ENCODE measurements at regions of chr19 and their contacts with region 1.

Region 1: DNA sequence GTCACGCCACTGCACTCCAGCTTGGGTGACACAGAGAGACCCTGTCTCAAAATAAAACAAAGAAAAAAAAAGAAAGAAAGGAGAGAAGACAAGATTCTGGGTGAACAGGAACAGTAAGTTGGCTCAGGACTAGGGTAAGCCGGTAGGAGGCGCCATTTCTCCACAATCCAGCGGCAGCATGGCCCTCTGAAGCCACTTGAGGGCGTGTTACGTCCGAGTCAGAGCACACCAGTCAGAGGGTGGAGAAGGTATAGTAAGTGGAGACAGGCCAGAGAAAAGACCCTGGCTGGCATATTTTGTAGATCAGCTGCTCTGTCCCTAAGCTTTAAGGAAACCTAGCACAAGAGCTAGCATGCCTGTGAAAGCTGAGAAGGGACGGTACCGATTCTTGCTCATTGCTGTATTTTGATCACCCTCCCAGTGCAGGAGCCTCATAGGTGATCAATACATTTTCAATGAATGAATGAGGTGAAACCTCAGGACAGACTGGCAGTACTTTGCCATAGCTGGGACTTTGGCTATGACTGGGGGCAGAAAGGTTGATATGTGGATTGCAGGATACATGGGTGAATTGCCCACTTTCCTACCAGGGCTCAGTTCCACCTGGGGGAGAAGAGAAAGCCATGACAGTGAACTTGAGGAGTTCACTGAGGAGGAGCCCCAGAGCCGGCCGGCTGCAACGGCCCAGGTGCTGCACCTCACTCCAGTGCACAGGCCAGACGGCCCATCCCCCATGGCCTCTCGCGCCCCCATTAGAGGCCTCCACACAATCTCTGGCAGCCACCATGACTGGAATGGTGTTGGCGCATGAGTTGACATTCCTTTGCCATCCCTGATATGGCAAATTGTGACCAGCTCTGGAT is 23.5 kb downstream of the POU2F2 start:
- DNase-seq: peak; percentile 93
- ATAC-seq: peak; percentile 96
- H3K4me3 Mint-ChIP-seq: no peak overlapping the region
- H3K27ac Mint-ChIP-seq: peak overlapping the region; percentile 38
- H3K4me1 Mint-ChIP-seq: peaks cover 28% of the 10 kb centered on the region
- H3K27me3 Mint-ChIP-seq: no peaks in the 10 kb centered on the region

Region 2: DNA sequence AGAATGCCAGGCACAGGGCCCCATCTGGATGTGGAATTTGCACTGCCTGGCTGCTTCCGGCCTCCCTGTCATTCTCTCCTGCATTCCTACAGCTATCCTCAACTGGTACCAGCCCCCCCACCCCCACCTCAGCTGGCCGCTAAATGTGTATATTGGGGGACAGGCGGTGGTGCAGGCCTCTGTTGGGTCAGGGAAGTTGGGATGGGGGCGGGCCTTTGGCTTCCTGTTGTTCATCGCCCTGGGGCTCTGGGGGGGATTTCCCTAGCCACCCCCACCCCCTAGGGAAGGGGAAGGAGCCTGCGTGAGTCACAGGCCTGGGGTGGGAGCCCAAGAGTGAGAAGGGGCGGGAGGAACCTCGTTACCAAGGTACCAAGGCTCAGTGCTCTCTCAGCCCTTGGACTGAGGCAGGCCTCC is 12.9 kb after region 1 on chr19:
- CTCF ChIA-PET with region 1: interaction called, 93 read pairs
- DNase-seq: peak; percentile 82
- ATAC-seq: peak; percentile 62
- H3K4me3 Mint-ChIP-seq: peak overlapping the region; percentile 61
- H3K27ac Mint-ChIP-seq: peak overlapping the region; percentile 91
- H3K4me1 Mint-ChIP-seq: peaks cover 46% of the 10 kb centered on the region
- H3K27me3 Mint-ChIP-seq: no peaks in the 10 kb centered on the region

Region 3: DNA sequence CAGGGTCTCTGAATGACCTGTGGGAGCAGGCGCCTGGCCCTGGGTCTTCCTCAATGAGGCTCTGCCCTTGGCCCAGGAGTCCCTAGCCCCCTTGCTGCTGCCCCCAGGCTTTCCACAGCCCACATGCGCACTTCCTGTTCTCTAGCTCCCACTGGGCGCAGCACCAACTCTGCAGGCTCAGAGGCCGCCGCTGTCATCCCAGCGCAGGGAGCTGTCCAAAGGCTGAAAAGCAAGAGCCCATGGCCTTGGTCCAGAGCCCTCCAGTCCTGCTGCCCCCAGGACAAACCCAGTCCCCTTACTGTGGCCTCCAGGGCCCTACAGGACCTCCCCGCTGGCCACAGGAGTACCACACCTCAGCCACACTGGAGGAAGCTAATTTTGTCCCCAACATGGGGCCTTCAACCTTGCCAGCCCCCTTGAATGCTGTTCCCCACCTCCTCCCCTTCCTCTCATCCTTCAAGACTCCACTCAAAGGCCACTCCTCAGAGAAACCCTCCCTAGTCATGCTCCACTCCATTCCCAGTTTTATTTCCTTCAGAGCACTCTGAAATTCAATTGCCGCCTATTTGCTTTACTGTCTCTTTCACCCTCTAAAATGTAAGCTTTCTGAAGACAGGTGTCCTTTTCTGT is 31.5 kb after region 1 on chr19:
- CTCF ChIA-PET with region 1: interaction called, 17 read pairs
- DNase-seq: peak; percentile 66
- ATAC-seq: peak; percentile 71
- H3K4me3 Mint-ChIP-seq: no peak overlapping the region
- H3K27ac Mint-ChIP-seq: no peak overlapping the region
- H3K4me1 Mint-ChIP-seq: peaks cover 10% of the 10 kb centered on the region
- H3K27me3 Mint-ChIP-seq: no peaks in the 10 kb centered on the region

Region 4: DNA sequence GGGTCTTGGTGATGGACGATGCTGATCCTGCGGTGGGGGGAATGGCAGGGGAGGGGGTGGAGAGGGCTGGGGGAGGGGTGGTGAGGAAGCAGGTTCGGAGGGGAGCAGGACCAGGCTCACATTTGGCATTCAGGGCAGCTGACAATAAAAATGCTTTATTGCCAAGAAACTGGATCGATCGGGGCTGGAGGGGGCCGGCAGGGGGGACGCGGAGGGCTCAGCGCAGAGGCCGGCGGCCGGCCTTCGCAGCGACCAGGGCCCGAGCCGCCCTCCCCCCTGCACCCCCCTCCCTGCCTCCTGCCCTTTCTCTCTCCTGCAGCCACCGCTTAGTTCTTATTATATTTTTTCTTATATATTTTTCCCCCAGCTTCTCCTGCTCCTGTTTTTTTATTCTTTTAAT is 41.6 kb after region 1 on chr19:
- CTCF ChIA-PET with region 1: no interaction called
- DNase-seq: no peak
- ATAC-seq: no peak
- H3K4me3 Mint-ChIP-seq: no peak overlapping the region
- H3K27ac Mint-ChIP-seq: no peak overlapping the region
- H3K4me1 Mint-ChIP-seq: peaks cover 16% of the 10 kb centered on the region
- H3K27me3 Mint-ChIP-seq: peaks cover 16% of the 10 kb centered on the region

Region 5: DNA sequence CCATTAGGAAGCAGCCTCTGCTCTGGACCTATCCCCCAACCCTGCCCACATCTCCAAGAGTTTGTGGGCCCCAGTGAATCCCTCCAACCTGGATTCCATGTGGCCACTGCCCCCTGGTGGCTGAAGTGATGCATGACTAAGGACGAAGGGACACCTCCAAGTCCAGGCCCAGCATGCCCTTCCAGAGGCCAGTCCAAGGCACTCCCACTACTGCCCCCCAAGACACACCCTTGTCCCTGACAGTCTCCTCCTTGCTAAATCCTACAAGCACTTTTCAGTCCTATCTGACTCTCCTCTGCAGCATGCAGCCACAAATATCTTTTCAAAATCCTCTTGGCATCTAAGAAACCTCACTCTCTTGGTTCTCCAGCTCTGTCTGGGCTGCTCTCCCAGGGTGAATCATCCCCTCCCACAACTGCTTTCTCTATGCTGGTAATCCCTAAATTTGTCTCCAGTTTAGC is 75.7 kb after region 1 on chr19:
- CTCF ChIA-PET with region 1: interaction called, 52 read pairs
- DNase-seq: peak; percentile 81
- ATAC-seq: peak; percentile 78
- H3K4me3 Mint-ChIP-seq: peak overlapping the region; percentile 5
- H3K27ac Mint-ChIP-seq: peak overlapping the region; percentile 87
- H3K4me1 Mint-ChIP-seq: peaks cover 39% of the 10 kb centered on the region
- H3K27me3 Mint-ChIP-seq: peaks cover 8% of the 10 kb centered on the region

Region 6: GRCh38 chr19:42283143-42284065 is 174.6 kb after region 1 on chr19:
- CTCF ChIA-PET with region 1: interaction called, 19 read pairs
- DNase-seq: peak; percentile 97
- ATAC-seq: peak; percentile 71
- H3K4me3 Mint-ChIP-seq: no peak overlapping the region
- H3K27ac Mint-ChIP-seq: no peak overlapping the region
- H3K4me1 Mint-ChIP-seq: peaks cover 32% of the 10 kb centered on the region
- H3K27me3 Mint-ChIP-seq: no peaks in the 10 kb centered on the region

Region 7: DNA sequence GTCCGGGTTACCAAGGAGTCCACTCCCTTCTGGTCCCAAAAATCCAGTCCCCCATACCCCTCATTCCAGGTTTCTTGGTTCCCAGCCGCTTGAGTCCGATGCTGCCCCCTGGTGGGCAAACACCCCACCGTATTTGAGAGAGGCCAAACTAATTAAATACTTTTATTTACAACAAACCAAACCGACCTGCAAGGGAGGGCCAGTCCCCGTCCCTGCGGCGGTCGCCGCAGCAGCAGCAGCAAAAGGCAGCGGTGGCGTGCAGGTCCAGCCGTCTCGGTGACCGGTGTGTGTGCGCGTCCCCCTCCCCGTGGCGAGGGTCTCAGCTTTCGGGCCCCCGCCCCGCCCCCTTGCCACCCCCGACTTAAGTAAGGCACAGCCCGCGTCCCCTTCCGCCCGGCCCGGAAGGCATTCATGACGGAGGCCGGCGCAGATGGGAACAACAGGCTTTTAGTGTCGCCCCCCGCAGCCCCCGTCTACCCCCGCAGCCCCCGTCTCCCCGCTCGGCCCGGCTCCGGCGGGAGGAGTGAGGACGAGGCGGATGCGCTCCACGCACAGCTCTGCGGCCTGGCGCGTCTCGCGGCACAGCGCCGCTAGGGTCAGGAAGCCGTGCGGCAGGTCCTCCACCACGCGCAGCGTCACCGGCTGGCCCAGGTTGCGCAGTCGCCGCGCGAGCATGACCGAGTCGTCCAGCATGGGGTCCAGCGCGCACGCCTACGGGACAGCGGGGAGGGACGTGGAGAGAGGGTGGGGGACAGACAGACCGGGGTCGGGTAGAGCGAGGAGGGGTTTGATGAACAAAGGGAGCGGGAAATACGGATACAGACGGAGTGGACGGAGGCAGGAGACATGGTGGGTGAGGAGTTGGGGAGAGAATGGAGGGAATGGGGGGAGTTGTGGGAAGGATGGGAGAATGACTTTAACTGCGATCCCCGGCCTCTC is 292.9 kb after region 1 on chr19:
- CTCF ChIA-PET with region 1: interaction called, 14 read pairs
- DNase-seq: peak; percentile 81
- ATAC-seq: peak; percentile 52
- H3K4me3 Mint-ChIP-seq: peak overlapping the region; percentile 65
- H3K27ac Mint-ChIP-seq: peak overlapping the region; percentile 42
- H3K4me1 Mint-ChIP-seq: peaks cover 29% of the 10 kb centered on the region
- H3K27me3 Mint-ChIP-seq: no peaks in the 10 kb centered on the region